ENCODE measurements at regions of chr14 and their contacts with region 1.

Region 1: DNA sequence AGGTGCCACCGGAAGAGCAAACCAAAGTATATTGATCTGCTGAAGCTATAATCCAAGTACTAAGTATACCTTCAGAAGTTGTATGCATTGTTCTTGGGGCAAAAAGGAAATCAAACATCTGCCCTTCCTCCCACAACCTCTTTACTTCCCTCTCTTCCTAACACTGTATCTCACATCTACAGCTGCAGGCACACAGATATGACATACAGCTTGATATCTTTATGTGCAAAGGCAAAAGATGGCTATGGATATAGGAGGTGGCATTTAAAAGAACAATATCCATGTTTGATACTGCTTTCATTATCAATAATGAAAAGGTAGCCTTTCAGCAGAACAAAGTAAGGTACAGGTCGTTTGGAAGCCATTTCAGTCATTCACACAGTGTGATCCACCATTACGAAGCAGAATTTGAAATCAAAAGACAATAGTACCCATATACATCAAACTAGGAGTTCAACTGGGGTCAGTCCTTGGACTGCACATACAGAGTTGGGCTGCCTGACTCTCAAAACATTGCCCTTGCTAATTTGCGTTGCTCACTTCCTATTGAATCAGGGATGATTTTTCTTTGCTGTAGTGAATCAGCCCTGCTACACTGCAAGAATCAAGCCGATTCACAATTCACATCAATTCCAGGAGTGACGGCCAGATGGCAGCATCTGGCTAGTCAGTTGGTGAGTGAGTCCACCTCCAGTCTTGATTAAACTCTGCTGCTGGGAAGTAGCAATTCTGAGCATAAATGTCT is 8.9 kb downstream of the ANG start:
- DNase-seq: no peak
- ATAC-seq: peak; percentile 91
- H3K4me3 ChIP-seq: no peak overlapping the region
- H3K27ac ChIP-seq: no peak overlapping the region
- H3K4me1 ChIP-seq: no peaks in the 10 kb centered on the region
- H3K27me3 ChIP-seq: no peaks in the 10 kb centered on the region
- CTCF ChIP-seq: peak; percentile 80 to 87 (median 85)
- EP300 ChIP-seq: no peak
- POLR2A ChIP-seq: no peak
- RAD21 ChIP-seq: peak; percentile 97

Region 2: DNA sequence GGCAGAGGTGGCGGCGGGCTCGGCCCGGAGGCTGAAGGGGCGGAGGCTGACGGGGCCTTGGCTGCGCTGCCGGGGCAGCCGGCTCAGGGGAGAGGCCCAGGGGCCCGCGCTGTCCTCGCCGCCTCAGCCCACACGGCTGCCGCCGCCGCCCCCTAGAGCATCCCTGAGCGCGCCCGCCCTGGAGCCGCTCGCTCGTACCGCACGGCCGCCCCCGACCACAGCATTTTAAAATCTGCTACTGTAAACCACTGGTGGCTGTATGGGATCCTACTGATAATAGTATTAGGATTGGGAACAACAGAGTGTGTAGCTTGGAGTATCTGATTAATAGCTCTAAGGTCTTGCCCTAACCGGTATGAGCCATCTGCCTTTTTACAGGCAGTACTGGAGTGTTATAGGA is 26.0 kb after region 1 on chr14:
- CTCF ChIA-PET with region 1: no interaction called
- POLR2A ChIA-PET with region 1: no interaction called
- RAD21 ChIA-PET with region 1: no interaction called
- SMC1A ChIA-PET with region 1: no interaction called
- in situ Hi-C with region 1: no loop called
- intact Hi-C with region 1: no loop called
- DNase-seq: no peak
- ATAC-seq: no peak
- H3K4me3 ChIP-seq: no peak overlapping the region
- H3K27ac ChIP-seq: no peak overlapping the region
- H3K4me1 ChIP-seq: no peaks in the 10 kb centered on the region; the same call in 1 of the 2 replicates
- H3K27me3 ChIP-seq: peaks cover 5 to 9% of the 10 kb centered on the region in 2 experiments; a peak in 3 of 4 replicates
- CTCF ChIP-seq: no peak
- EP300 ChIP-seq: no peak
- POLR2A ChIP-seq: no peak
- RAD21 ChIP-seq: no peak

Region 3: GRCh38 chr14:20757965-20758364 is 60.5 kb after region 1 on chr14:
- CTCF ChIA-PET with region 1: interaction called, 14 read pairs
- POLR2A ChIA-PET with region 1: no interaction called
- RAD21 ChIA-PET with region 1: interaction called, 4 read pairs
- SMC1A ChIA-PET with region 1: interaction called, 4 read pairs
- in situ Hi-C with region 1: no loop called
- intact Hi-C with region 1: loop called (anchors 5 kb)
- DNase-seq: no peak
- ATAC-seq: peak; percentile 74
- H3K4me3 ChIP-seq: no peak overlapping the region
- H3K27ac ChIP-seq: no peak overlapping the region
- H3K4me1 ChIP-seq: no peaks in the 10 kb centered on the region
- H3K27me3 ChIP-seq: no peaks in the 10 kb centered on the region
- CTCF ChIP-seq: peak; percentile 43 to 62 (median 54); a peak in 5 of 6 replicates
- EP300 ChIP-seq: no peak
- POLR2A ChIP-seq: no peak
- RAD21 ChIP-seq: peak; percentile 75

Region 4: DNA sequence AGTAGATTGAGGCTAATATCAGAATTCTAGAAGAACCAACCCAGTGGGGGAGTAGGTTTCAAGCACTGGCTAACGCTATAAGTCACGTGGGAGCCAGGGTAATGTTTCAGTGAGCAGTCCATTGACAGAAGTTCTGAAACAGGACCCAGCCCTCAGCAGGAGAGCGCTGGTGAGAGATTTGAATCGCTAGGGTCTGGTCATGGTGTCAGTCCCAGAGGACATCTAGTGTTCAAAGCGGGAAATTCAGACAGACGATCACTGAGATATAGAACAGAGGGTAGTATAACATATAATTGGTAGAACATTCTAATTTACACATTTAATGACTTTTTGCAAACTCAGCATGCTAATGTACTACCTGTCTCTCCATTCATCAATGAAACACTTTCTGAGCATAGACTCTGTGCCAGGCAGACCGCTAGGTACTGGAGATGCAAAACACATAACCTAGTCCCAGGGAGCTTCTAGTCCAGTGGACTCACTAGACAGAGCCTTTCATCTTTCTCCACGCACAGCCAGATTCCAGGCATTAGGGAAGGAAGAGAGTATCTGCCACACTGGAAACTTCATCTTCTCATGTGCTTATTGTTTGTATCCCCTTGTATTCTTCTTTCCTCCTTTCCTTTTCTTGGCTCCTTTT is 158.3 kb after region 1 on chr14:
- CTCF ChIA-PET with region 1: interaction called, 51 read pairs
- POLR2A ChIA-PET with region 1: interaction called, 5 read pairs
- RAD21 ChIA-PET with region 1: interaction called, 26 read pairs
- SMC1A ChIA-PET with region 1: interaction called, 34 read pairs
- in situ Hi-C with region 1: loop called (anchors 5 kb)
- intact Hi-C with region 1: loop called (anchors 1 kb)
- DNase-seq: peak; percentile 21
- ATAC-seq: peak; percentile 95
- H3K4me3 ChIP-seq: no peak overlapping the region
- H3K27ac ChIP-seq: no peak overlapping the region
- H3K4me1 ChIP-seq: no peaks in the 10 kb centered on the region
- H3K27me3 ChIP-seq: no peaks in the 10 kb centered on the region
- CTCF ChIP-seq: peak; percentile 74 to 85 (median 81)
- EP300 ChIP-seq: no peak
- POLR2A ChIP-seq: no peak
- RAD21 ChIP-seq: peak; percentile 95

Region 5: DNA sequence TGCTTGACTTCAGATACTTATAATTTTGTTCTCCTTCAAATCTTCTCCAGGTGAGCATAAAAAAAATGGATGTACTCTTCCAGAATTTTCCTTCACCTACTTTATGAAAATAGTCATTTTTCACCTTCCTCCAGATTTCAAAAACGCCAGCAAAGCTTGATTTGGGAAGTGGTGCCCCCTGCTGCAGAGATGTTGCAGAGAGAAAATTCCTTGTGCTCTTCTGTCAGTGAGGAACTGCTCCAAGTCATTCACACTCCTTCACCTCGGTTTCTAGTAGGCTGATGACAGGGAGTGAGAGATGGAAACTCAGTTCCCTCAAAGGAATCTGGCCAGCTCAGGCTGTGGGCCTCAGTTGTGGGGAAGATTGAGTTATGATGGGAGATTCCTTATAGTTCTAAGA is 169.5 kb after region 1 on chr14:
- CTCF ChIA-PET with region 1: interaction called, 16 read pairs
- POLR2A ChIA-PET with region 1: no interaction called
- RAD21 ChIA-PET with region 1: interaction called, 12 read pairs
- SMC1A ChIA-PET with region 1: interaction called, 5 read pairs
- in situ Hi-C with region 1: no loop called
- intact Hi-C with region 1: no loop called
- DNase-seq: no peak
- ATAC-seq: no peak
- H3K4me3 ChIP-seq: no peak overlapping the region
- H3K27ac ChIP-seq: no peak overlapping the region
- H3K4me1 ChIP-seq: no peaks in the 10 kb centered on the region
- H3K27me3 ChIP-seq: no peaks in the 10 kb centered on the region
- CTCF ChIP-seq: peak; percentile 30 to 46 (median 31); a peak in 5 of 6 replicates
- EP300 ChIP-seq: no peak
- POLR2A ChIP-seq: no peak
- RAD21 ChIP-seq: peak; percentile 34; the same call in 1 of the 2 replicates

Region 6: DNA sequence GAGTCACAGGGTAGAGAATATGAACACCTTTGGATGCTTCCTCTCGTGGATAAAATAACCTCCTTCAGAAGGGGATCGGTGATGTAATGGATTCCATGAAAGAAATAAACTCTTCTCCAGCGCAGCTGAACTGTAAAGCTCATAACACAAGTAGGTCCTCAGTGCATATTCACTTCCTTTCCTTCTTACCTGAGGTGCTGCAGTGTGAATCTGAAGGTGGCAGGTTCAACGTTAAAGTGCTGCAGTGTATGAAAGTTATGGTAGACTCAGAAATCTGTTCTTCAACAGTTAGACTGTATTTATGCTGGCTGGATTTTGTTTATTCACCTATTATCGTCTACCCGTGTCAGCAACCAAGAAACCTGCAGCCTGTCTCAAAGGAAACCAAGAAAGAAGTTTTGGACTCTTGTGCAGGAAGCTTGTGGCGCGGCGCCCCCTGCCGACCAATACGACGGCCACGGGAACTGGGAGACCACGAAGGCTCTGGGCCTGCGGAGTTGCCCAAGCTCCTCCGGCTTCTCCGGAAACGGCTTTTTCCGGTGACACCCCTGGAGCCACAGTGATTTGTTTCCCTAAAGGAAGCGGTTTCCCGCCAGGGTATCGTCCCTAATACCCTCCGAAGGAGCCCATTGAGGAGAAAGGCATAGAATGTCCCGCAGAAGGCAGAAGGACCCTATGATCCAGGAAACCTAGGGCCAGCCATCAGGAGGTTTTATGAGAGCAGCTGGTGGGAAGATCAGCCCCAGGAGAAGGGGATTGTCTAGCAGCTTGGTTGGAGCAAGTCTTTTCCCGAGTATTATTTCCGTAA is 176.1 kb after region 1 on chr14:
- CTCF ChIA-PET with region 1: interaction called, 16 read pairs
- POLR2A ChIA-PET with region 1: no interaction called
- RAD21 ChIA-PET with region 1: interaction called, 12 read pairs
- SMC1A ChIA-PET with region 1: interaction called, 6 read pairs
- in situ Hi-C with region 1: no loop called
- intact Hi-C with region 1: loop called (anchors 1 kb)
- DNase-seq: no peak
- ATAC-seq: peak; percentile 98
- H3K4me3 ChIP-seq: no peak overlapping the region
- H3K27ac ChIP-seq: no peak overlapping the region
- H3K4me1 ChIP-seq: no peaks in the 10 kb centered on the region; the same call in 1 of the 2 replicates
- H3K27me3 ChIP-seq: no peaks in the 10 kb centered on the region
- CTCF ChIP-seq: peak; percentile 75 to 88 (median 85)
- EP300 ChIP-seq: no peak
- POLR2A ChIP-seq: no peak
- RAD21 ChIP-seq: peak; percentile 69

Region 7: DNA sequence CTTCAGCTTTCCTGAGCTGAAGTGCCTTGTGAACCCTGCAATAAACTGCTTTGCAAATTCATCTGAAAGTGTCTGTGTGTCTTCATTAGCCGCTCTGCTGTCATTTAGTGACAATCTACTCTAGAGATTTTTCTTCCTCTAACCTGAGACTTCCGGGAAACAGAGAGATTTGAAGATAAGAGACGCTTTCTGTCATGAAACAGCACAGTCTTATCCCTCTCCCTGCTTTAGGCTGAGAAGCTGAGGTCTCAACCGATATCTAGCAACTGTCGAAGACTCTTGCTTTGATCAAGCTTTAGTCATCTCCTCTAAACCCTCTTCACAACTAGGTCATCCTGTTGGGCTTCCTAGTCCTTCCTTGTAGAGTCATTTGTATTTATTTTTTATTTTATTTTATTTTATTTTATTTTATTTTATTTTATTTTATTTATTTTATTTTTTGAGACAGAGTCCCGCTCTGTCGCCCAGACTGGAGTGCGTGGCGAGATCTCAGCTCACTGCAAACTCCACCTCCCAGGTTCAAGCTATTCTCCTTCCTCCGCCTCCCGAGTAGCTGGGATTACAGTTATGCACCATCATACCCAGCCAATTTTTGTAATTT is 259.0 kb after region 1 on chr14:
- CTCF ChIA-PET with region 1: no interaction called
- POLR2A ChIA-PET with region 1: no interaction called
- RAD21 ChIA-PET with region 1: no interaction called
- SMC1A ChIA-PET with region 1: no interaction called
- in situ Hi-C with region 1: loop called (anchors 5 kb)
- intact Hi-C with region 1: no loop called
- DNase-seq: no peak
- ATAC-seq: no peak
- H3K4me3 ChIP-seq: no peak overlapping the region
- H3K27ac ChIP-seq: no peak overlapping the region
- H3K4me1 ChIP-seq: no peaks in the 10 kb centered on the region
- H3K27me3 ChIP-seq: peaks cover 0 to 2% of the 10 kb centered on the region in 2 experiments; a peak in 2 of 4 replicates
- CTCF ChIP-seq: no peak
- EP300 ChIP-seq: no peak
- POLR2A ChIP-seq: no peak
- RAD21 ChIP-seq: no peak

Region 8: DNA sequence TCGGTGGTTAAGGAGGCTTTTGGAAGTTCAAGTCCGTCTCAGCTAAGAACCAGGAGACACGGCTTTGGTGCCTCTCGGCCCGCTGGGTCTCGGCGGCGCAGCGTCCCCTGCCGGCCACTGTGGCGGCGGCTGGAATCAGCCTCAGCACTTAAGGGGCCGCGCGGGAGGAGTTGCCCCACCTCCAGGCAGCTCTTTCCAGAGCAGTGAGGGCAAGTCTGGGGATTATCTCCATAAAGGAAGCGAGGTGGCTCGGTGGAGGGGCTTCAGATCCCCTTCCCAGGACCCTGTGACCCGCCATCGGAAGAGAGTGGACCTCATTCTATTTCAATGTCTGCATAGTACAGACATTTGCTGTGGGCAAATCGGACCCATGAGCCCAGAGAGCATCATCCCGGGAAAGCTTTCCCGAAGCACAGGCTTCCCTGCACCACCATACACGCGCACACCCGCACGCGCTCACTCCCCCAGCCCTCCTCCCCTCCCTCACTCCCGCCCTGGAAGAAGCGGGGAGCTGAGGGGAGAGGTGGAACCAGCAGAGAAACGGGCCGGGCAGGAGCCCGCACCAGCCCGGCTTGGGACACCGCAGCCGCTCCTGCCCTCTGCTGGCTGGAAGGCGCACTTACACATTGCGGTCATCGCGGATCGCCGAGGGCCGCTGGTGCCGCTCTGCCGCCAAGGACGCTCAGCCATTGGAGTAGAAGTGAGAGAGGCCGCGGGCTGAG is 273.7 kb after region 1 on chr14:
- CTCF ChIA-PET with region 1: interaction called, 29 read pairs
- POLR2A ChIA-PET with region 1: no interaction called
- RAD21 ChIA-PET with region 1: interaction called, 3 read pairs
- SMC1A ChIA-PET with region 1: interaction called, 4 read pairs
- in situ Hi-C with region 1: no loop called
- intact Hi-C with region 1: loop called (anchors 1 kb)
- DNase-seq: peak; percentile 9
- ATAC-seq: peak; percentile 98
- H3K4me3 ChIP-seq: peak overlapping the region; percentile 60
- H3K27ac ChIP-seq: no peak overlapping the region
- H3K4me1 ChIP-seq: no peaks in the 10 kb centered on the region
- H3K27me3 ChIP-seq: no peaks in the 10 kb centered on the region; a peak in 1 of 4 replicates
- CTCF ChIP-seq: peak; percentile 87 to 98 (median 90)
- EP300 ChIP-seq: no peak
- POLR2A ChIP-seq: no peak
- RAD21 ChIP-seq: peak; percentile 49

Measured in GM12878 (cell line).